PC-3 (cell line): ENCODE measurements at regions of chr14 and their contacts with region 1.

Region 1: GRCh38 chr14:81220830-81221578 is at the start of gene GTF2A1:
- DNase-seq: peak; percentile 95
- ATAC-seq: peak; percentile 75
- H3K4me3 ChIP-seq: peak within 1 kb of the TSS; percentile 97
- H3K27ac ChIP-seq: peak within 1 kb of the TSS; percentile 97
- H3K4me1 ChIP-seq: peaks cover 23% of the 10 kb centered on the region
- H3K27me3 ChIP-seq: no peaks in the 10 kb centered on the region
- CTCF ChIP-seq: no peak
- total RNA-seq, gene GTF2A1: 20.7 and 24.4 TPM in 2 replicates

Region 2: DNA sequence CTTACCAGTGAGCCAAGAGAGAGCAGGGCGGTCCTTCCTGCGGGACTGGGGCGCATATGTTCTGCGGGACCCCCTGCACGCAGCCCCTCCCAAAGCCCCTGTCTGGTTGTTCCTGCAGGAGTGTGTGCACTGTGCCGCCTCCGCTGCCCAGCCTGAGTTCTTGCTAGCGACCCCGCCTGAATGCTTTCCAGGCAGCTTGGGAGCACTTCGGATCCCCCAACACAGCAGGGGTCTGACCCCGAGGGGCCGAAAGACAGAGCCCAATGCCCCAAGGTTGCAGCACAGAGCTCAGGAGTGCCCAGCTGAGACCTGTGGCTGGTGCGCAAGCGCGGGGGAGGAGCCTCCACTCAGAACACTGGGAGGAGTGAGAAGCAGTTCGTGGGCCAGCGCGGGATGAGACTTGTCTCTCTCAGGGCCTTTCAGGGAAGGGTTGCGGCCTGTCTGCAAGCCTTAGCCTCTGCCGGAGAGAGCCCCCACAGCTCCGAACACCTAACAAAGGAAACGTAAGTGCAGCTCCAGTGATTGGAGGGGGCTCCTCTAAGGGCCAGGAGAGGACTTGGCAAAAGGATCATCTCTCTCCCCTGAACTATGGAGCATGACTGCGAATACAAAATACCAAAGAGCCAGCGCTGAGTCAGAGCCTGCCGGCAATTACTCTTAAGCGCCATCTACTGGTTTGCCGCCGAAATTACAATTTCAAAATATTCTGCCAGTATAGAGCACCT is 50.7 kb before region 1 on chr14:
- CTCF ChIA-PET with region 1: no interaction called
- POLR2A ChIA-PET with region 1: interaction called, 9 read pairs
- intact Hi-C with region 1: loop called (anchors 2 kb)
- DNase-seq: peak; percentile 84
- ATAC-seq: peak; percentile 99
- H3K4me3 ChIP-seq: peak overlapping the region; percentile 92
- H3K27ac ChIP-seq: peak overlapping the region; percentile 88
- H3K4me1 ChIP-seq: peaks cover 14% of the 10 kb centered on the region
- H3K27me3 ChIP-seq: no peaks in the 10 kb centered on the region
- CTCF ChIP-seq: peak; percentile 91

Region 3: DNA sequence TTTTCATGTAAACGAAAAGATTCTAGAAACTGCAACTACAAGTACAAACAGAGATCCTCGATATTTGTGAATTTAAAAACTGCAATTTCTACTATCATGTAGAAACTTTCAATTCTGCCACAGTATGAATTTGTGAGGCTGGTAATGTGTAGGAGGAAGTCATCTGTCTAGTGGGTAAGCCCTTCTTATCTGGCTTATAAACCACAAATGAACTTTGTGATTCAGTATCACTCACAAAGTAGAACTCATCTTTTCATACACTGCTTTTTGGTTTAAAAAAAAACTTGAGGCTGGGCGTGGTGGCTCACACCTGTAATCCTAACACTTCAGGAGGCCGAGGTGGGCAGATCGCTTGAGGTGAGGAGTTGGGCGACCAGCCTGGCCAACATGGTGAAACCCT is 20.9 kb before region 1 on chr14:
- CTCF ChIA-PET with region 1: interaction called, 4 read pairs
- POLR2A ChIA-PET with region 1: interaction called, 7 read pairs
- intact Hi-C with region 1: loop called (anchors 2 kb)
- DNase-seq: no peak
- ATAC-seq: peak; percentile 40
- H3K4me3 ChIP-seq: no peak overlapping the region
- H3K27ac ChIP-seq: no peak overlapping the region
- H3K4me1 ChIP-seq: peaks cover 19% of the 10 kb centered on the region; the same call in 1 of the 2 replicates
- H3K27me3 ChIP-seq: no peaks in the 10 kb centered on the region
- CTCF ChIP-seq: no peak

Region 4: DNA sequence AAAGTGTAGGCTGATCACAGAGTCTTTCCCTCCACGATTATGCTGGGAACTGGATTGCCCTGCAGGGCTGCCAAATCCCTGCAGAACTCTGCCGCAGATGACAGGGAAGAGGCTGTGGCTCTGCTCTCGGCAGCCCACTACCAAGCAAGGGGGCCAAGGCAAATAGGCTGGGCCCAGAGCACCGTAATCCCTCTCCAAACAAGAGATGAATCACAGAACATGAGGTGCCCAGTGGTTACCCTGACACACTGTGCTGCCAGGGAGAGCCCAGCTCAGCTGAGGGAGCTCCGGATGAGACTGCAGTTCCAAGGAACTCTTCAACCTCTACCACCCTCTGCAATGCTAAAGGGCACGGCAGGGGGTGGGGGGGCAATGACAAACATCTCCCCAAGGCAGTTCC is 145.2 kb after region 1 on chr14:
- CTCF ChIA-PET with region 1: no interaction called
- POLR2A ChIA-PET with region 1: interaction called, 24 read pairs
- intact Hi-C with region 1: no loop called
- DNase-seq: peak; percentile 72
- ATAC-seq: peak; percentile 99
- H3K4me3 ChIP-seq: no peak overlapping the region
- H3K27ac ChIP-seq: peak overlapping the region; percentile 44
- H3K4me1 ChIP-seq: peaks cover 13% of the 10 kb centered on the region
- H3K27me3 ChIP-seq: no peaks in the 10 kb centered on the region
- CTCF ChIP-seq: no peak

Region 5: DNA sequence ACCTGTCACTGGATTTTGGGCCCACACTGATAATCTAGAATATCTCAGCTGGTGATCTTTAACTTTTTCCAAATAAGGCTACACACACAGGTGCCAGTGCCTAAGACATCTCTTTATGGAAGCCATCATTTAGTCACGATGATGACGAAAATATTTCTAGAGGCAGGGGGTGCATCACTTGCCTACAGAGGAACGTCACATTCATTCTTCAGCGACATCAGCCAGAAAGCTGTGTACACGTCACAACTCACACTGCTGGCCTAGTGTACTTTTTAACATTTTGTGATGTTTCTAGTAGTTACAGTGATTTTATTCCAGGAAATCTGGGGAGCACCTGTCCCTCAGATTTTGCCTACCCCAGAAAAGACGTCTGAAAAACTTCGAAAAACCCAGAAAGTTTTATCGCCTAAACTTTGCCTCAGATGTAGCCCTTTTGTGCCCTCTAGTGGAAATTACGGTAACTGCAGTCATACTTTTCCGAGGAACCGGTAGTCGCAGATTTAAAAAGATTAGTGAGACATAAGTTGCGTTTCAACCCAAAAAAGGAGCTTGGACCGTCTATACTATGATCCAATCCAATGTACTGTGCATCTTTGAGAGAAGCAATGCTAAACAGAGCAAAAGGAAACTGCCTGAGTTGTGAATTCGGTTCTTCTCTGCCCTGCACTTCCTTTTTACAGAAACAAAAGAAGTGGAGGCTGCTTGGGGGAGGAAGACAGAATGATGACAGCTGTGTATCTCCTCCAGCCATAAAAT is 243.4 kb after region 1 on chr14:
- CTCF ChIA-PET with region 1: no interaction called
- POLR2A ChIA-PET with region 1: no interaction called
- intact Hi-C with region 1: loop called (anchors 2 kb)
- DNase-seq: peak; percentile 88
- ATAC-seq: peak; percentile 44; the same call in 1 of the 2 replicates
- H3K4me3 ChIP-seq: peak overlapping the region; percentile 61
- H3K27ac ChIP-seq: no peak overlapping the region
- H3K4me1 ChIP-seq: no peaks in the 10 kb centered on the region
- H3K27me3 ChIP-seq: no peaks in the 10 kb centered on the region
- CTCF ChIP-seq: peak; percentile 96

Region 6: DNA sequence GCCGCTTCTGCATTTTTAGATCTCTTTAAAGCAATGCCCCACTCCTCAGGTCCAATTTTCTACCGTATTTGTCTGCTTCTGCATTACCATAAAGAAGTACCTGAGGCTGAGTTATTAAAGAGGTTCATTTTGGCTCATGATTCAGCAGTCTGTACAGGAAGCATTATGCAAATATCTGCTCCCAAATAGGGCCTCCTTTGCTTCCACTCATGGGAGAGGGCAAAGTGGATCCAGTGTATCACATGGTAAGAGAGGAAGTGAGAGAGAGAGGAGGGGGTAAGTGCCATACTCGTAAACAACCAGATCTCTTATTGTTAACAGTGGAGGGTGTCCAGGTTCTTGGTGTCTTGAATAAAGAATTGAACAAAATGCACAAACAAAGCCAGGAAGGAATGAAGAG is 628.7 kb after region 1 on chr14:
- CTCF ChIA-PET with region 1: no interaction called
- POLR2A ChIA-PET with region 1: no interaction called
- intact Hi-C with region 1: no loop called
- DNase-seq: no peak
- ATAC-seq: no peak
- H3K4me3 ChIP-seq: no peak overlapping the region
- H3K27ac ChIP-seq: no peak overlapping the region
- H3K4me1 ChIP-seq: no peaks in the 10 kb centered on the region
- H3K27me3 ChIP-seq: no peaks in the 10 kb centered on the region
- CTCF ChIP-seq: no peak

Region 7: DNA sequence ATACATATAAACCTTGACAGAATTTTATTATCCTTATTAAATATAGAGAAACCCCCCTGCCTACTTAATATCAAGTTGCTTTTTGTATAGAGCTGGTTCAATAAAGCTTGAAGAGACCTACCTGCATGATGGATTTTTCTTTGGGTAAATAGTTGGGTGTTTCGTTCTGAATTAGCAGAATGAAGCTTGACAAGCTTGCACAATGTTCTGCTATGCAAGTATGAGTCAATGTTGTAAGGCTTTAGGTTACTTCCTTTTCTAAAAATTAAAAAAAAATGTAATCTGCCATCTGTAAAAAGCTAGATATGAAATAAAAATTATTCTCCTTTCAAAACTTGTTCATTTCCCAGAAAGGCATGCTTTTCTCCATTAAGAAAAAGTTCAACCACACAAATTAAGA is 1975.2 kb after region 1 on chr14:
- CTCF ChIA-PET with region 1: no interaction called
- POLR2A ChIA-PET with region 1: no interaction called
- intact Hi-C with region 1: no loop called
- DNase-seq: no peak
- ATAC-seq: no peak
- H3K4me3 ChIP-seq: no peak overlapping the region
- H3K27ac ChIP-seq: no peak overlapping the region
- H3K4me1 ChIP-seq: no peaks in the 10 kb centered on the region
- H3K27me3 ChIP-seq: no peaks in the 10 kb centered on the region
- CTCF ChIP-seq: no peak